ENCODE measurements at regions of chr2 and their contacts with region 1.

Region 1: GRCh38 chr2:3959372-3959771 is 256.0 kb downstream of the DCDC2C start:
- DNase-seq: peak in 1 of 2 experiments; percentile 36
- H3K4me3 ChIP-seq: no peak overlapping the region
- H3K4me3 Mint-ChIP-seq: no peak overlapping the region
- H3K27ac Mint-ChIP-seq: no peak overlapping the region
- H3K4me1 ChIP-seq: no peaks in the 10 kb centered on the region
- H3K4me1 Mint-ChIP-seq: no peaks in the 10 kb centered on the region
- H3K27me3 ChIP-seq: no peaks in the 10 kb centered on the region
- H3K27me3 Mint-ChIP-seq: peaks cover 6% of the 10 kb centered on the region
- CTCF ChIP-seq: peak; percentile 69 to 86

Region 2: GRCh38 chr2:3930246-3930645 is 29.1 kb before region 1 on chr2:
- CTCF ChIA-PET with region 1: no interaction called
- POLR2A ChIA-PET with region 1: no interaction called
- intact Hi-C with region 1: no loop called
- DNase-seq: no peak
- H3K4me3 ChIP-seq: no peak overlapping the region
- H3K4me3 Mint-ChIP-seq: no peak overlapping the region
- H3K27ac Mint-ChIP-seq: no peak overlapping the region
- H3K4me1 ChIP-seq: no peaks in the 10 kb centered on the region
- H3K4me1 Mint-ChIP-seq: no peaks in the 10 kb centered on the region
- H3K27me3 ChIP-seq: no peaks in the 10 kb centered on the region
- H3K27me3 Mint-ChIP-seq: no peaks in the 10 kb centered on the region
- CTCF ChIP-seq: no peak

Region 3: DNA sequence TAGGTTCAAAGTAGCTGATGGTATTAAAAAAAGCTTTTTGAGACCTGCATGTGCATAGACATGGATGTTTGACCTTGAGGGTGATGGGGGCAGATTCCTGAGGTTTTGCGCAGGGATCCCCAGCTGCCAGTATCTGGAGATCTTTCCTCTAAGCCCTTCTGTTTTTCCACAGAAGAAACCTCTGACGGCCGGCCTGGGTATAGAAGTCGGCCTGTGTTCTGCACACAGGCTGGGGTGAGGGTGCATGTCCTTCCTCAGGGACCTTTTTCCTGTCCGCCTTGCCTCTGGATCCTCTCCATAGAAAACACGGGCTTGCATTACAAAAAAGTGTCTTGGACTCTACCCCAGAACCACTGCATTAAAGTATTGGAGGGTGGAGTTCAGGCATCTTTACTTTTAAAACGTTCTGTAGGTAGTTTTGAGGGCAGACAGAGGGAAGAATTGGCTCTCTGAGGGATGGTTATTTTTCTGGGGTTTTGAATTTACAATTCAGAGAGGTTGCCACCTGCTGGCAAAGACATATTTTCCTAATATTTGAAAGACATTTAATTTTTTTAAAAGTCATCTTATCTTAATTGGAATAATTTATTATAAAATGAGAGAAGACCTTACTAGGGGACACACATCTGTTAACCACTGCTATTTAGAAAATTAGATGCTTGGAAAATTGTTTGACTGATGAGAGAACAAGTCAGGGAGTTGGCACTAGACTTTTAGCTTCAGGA is 94.6 kb after region 1 on chr2:
- CTCF ChIA-PET with region 1: interaction called, 5 read pairs
- POLR2A ChIA-PET with region 1: no interaction called
- intact Hi-C with region 1: loop called (anchors 1 kb)
- DNase-seq: no peak
- H3K4me3 ChIP-seq: no peak overlapping the region
- H3K4me3 Mint-ChIP-seq: no peak overlapping the region
- H3K27ac Mint-ChIP-seq: no peak overlapping the region
- H3K4me1 ChIP-seq: no peaks in the 10 kb centered on the region
- H3K4me1 Mint-ChIP-seq: no peaks in the 10 kb centered on the region
- H3K27me3 ChIP-seq: no peaks in the 10 kb centered on the region
- H3K27me3 Mint-ChIP-seq: peaks cover 3% of the 10 kb centered on the region
- CTCF ChIP-seq: peak in 1 of 2 experiments; percentile 30

Region 4: GRCh38 chr2:4122726-4123125 is 163.4 kb after region 1 on chr2:
- CTCF ChIA-PET with region 1: no interaction called
- POLR2A ChIA-PET with region 1: no interaction called
- intact Hi-C with region 1: no loop called
- DNase-seq: no peak
- H3K4me3 ChIP-seq: no peak overlapping the region
- H3K4me3 Mint-ChIP-seq: no peak overlapping the region
- H3K27ac Mint-ChIP-seq: no peak overlapping the region
- H3K4me1 ChIP-seq: no peaks in the 10 kb centered on the region
- H3K4me1 Mint-ChIP-seq: no peaks in the 10 kb centered on the region
- H3K27me3 ChIP-seq: no peaks in the 10 kb centered on the region
- H3K27me3 Mint-ChIP-seq: no peaks in the 10 kb centered on the region
- CTCF ChIP-seq: no peak

Region 5: GRCh38 chr2:4272261-4272858 is 313.0 kb after region 1 on chr2:
- CTCF ChIA-PET with region 1: no interaction called
- POLR2A ChIA-PET with region 1: no interaction called
- intact Hi-C with region 1: loop called (anchors 10 kb)
- DNase-seq: no peak
- H3K4me3 ChIP-seq: no peak overlapping the region
- H3K4me3 Mint-ChIP-seq: no peak overlapping the region
- H3K27ac Mint-ChIP-seq: no peak overlapping the region
- H3K4me1 ChIP-seq: no peaks in the 10 kb centered on the region
- H3K4me1 Mint-ChIP-seq: no peaks in the 10 kb centered on the region
- H3K27me3 ChIP-seq: no peaks in the 10 kb centered on the region
- H3K27me3 Mint-ChIP-seq: no peaks in the 10 kb centered on the region
- CTCF ChIP-seq: no peak

Region 6: GRCh38 chr2:4715069-4715468 is 755.7 kb after region 1 on chr2:
- CTCF ChIA-PET with region 1: interaction called, 8 read pairs
- POLR2A ChIA-PET with region 1: no interaction called
- intact Hi-C with region 1: loop called (anchors 1 kb)
- DNase-seq: peak in 1 of 2 experiments; percentile 5
- H3K4me3 ChIP-seq: no peak overlapping the region
- H3K4me3 Mint-ChIP-seq: no peak overlapping the region
- H3K27ac Mint-ChIP-seq: no peak overlapping the region
- H3K4me1 ChIP-seq: no peaks in the 10 kb centered on the region
- H3K4me1 Mint-ChIP-seq: no peaks in the 10 kb centered on the region
- H3K27me3 ChIP-seq: no peaks in the 10 kb centered on the region
- H3K27me3 Mint-ChIP-seq: no peaks in the 10 kb centered on the region
- CTCF ChIP-seq: no peak